Caco-2 (cell line): ENCODE measurements at regions of chr12 and their contacts with region 1.

Region 1: DNA sequence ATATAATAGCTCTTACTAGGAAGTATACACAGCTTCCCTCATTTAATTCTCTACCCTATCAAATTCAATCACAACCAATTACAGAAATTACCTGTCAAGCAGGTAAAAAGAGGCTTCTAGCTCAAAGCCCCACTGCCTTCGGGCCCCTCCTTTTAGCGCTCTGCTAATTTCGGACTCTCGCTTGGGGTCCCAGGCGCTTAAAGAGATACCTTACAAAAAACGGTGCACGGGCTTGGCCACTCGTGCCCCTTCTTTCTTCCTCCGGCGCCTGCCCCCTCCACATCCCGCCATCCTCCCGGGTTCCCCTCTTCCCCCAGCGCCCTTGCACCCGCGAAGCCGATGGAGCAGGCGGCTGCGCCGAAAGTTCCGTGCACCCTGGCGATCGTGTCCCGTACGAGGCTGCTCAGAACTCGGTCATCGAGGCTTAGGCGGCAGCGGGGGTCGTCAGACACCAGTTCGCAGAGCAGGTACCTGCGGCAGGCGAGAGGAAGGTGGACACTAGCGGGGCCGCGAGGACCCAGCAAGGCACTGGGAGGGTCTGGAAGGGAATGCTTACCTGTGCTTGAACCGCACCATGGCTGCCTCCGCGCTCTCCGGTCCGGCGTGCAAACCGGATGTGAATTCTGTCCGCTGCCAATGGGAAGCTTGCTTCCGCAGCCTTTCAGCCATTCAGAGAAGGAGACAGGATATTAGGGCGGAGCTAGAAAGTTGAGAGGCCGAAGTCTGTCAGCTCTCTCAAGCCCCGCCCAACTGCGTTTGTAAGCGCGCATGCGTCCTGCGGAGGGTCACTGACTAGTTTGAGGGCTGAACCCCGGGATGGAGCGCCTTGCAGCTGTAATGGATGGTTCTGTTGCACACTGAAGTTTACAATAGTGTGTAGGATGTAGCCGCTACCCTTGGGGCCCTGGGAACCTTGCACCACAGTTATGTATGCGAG is at the start of gene POP5:
- DNase-seq: peak; percentile 96 to 97
- H3K4me3 ChIP-seq: peak within 1 kb of the TSS; percentile 86
- H3K4me3 Mint-ChIP-seq: peak within 1 kb of the TSS; percentile 99
- H3K27ac Mint-ChIP-seq: peak within 1 kb of the TSS; percentile 96
- H3K4me1 ChIP-seq: no peaks in the 10 kb centered on the region
- H3K4me1 Mint-ChIP-seq: peaks cover 15% of the 10 kb centered on the region
- H3K27me3 ChIP-seq: no peaks in the 10 kb centered on the region
- H3K27me3 Mint-ChIP-seq: no peaks in the 10 kb centered on the region
- CTCF ChIP-seq: no peak
- total RNA-seq, gene POP5: 49.5 and 53.9 TPM in 2 replicates

Region 2: GRCh38 chr12:120437754-120438494 is 143.1 kb before region 1 on chr12 and contains the start of gene COX6A1:
- CTCF ChIA-PET with region 1: no interaction called
- POLR2A ChIA-PET with region 1: no interaction called
- intact Hi-C with region 1: loop called (anchors 2 kb)
- DNase-seq: peak; percentile 97 to 99
- H3K4me3 ChIP-seq: peak within 1 kb of the TSS; percentile 46
- H3K4me3 Mint-ChIP-seq: peak within 1 kb of the TSS; percentile 90
- H3K27ac Mint-ChIP-seq: peak within 1 kb of the TSS; percentile 70
- H3K4me1 ChIP-seq: no peaks in the 10 kb centered on the region
- H3K4me1 Mint-ChIP-seq: no peaks in the 10 kb centered on the region
- H3K27me3 ChIP-seq: no peaks in the 10 kb centered on the region
- H3K27me3 Mint-ChIP-seq: no peaks in the 10 kb centered on the region
- CTCF ChIP-seq: no peak
- total RNA-seq, gene COX6A1: 474 and 492 TPM in 2 replicates

Region 3: DNA sequence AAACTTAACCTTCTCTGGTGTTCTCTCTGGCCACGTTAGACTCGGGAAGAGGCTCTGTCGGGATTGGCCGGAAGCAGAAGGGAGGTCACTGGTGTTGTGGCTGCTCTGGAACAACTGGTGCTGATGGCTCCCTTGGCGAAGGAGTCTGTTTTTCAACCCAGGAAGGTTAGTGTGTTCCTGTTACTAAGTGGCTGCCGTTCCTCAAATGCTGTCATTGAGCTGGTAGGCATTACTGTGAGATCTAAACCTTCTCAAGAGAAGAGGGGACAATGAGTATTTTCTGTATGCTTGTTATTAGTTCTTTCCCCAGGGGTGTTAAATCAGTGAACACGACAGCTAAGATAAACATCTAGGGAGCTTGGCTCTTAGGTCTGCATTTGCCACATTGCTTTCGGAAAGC is 18.1 kb before region 1 on chr12:
- CTCF ChIA-PET with region 1: interaction called, 12 read pairs
- POLR2A ChIA-PET with region 1: interaction called, 3 read pairs
- intact Hi-C with region 1: no loop called
- DNase-seq: no peak
- H3K4me3 ChIP-seq: no peak overlapping the region
- H3K4me3 Mint-ChIP-seq: no peak overlapping the region
- H3K27ac Mint-ChIP-seq: no peak overlapping the region
- H3K4me1 ChIP-seq: 0 out of 2 replicates have a peak, but pooled peaks cover 6% of the 10 kb centered on the region
- H3K4me1 Mint-ChIP-seq: peaks cover 7% of the 10 kb centered on the region
- H3K27me3 ChIP-seq: no peaks in the 10 kb centered on the region
- H3K27me3 Mint-ChIP-seq: no peaks in the 10 kb centered on the region
- CTCF ChIP-seq: no peak

Region 4: GRCh38 chr12:120710031-120710804 is 129.2 kb after region 1 on chr12 and contains the start of gene UNC119B:
- CTCF ChIA-PET with region 1: interaction called, 3 read pairs
- POLR2A ChIA-PET with region 1: no interaction called
- intact Hi-C with region 1: loop called (anchors 1 kb)
- DNase-seq: peak; percentile 61 to 82
- H3K4me3 ChIP-seq: peak within 1 kb of the TSS; percentile 70
- H3K4me3 Mint-ChIP-seq: peak within 1 kb of the TSS; percentile 80
- H3K27ac Mint-ChIP-seq: peak within 1 kb of the TSS; percentile 45
- H3K4me1 ChIP-seq: peaks cover 9% of the 10 kb centered on the region
- H3K4me1 Mint-ChIP-seq: peaks cover 12% of the 10 kb centered on the region
- H3K27me3 ChIP-seq: no peaks in the 10 kb centered on the region
- H3K27me3 Mint-ChIP-seq: no peaks in the 10 kb centered on the region
- CTCF ChIP-seq: no peak
- total RNA-seq, gene UNC119B: 39.1 and 44.4 TPM in 2 replicates

Region 5: DNA sequence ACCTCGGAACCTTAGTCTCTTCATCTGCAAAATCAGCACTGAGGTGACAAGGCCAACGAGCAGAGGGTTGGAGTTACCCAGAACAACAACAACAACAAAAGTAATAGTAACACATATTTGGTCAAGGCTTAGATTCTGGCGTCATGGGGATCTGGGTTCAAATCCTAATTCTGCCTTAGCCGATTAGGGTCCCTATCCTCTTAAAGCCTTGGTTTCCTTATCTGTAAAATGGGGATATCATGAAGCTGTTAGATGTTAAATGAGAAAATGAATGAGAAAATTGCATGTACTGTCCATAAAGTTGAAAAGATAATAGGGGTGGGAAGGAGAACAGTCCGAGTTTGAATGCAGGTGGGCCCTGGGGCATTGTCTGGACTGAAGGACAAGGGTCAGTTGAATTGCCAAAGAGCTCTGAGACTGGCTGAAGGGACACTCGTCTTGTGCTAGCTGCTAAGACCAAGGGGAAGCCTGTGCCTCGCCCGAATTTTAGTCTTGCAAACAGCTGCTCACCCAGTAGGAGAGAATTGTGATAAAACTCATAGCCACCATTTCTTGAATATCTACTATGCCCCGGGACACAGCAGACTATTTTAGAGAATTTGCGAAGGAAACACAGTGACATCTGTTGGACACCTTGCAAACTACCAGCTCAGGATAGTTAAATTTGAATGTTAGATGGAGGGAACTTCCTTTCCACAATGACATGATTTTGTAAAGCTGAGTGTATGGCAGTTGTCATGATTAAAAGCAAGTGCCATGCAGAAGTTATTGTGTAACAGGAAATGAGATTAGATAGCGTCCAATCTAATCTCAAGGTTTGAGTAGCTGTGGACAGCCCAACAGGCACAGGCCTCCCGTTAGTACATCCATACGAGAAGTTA is 390.5 kb after region 1 on chr12:
- CTCF ChIA-PET with region 1: interaction called, 8 read pairs
- POLR2A ChIA-PET with region 1: interaction called, 5 read pairs
- intact Hi-C with region 1: loop called (anchors 2 kb)
- DNase-seq: peak in 1 of 2 experiments; percentile 43
- H3K4me3 ChIP-seq: no peak overlapping the region
- H3K4me3 Mint-ChIP-seq: no peak overlapping the region
- H3K27ac Mint-ChIP-seq: no peak overlapping the region
- H3K4me1 ChIP-seq: peaks cover 36% of the 10 kb centered on the region
- H3K4me1 Mint-ChIP-seq: peaks cover 12% of the 10 kb centered on the region
- H3K27me3 ChIP-seq: no peaks in the 10 kb centered on the region
- H3K27me3 Mint-ChIP-seq: no peaks in the 10 kb centered on the region
- CTCF ChIP-seq: peak; percentile 45 to 68

Region 6: DNA sequence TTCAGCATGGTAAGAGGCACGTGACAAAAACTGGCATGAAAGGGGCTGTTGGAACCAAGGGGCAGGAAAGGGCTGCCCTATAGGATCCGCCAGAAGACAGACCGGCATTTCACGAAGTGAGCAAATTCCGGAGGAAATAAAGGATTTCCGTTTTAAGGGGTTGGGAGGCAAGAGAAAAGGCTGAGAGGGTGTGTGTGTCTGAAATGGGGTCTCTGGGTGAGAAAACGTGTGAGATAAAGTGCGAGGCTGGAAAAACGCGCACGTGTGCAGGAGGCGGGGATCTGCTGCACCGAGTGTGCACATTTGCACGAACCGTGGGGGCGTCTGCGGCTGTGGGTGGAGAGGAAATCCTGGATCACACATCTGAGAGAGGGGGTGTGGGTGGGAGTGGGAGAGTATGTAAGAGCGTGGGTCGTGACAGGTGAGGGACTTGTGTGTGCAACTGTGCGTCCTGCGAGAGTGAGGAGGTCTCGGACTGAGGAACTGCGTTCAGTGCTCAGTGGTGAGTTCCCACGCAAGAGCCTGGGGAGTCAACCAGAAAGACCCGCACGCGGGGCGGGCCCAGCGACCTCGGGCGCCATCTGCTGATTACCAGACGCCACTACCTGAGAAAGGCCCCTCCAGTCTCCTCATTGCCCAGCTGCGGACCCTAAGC is 514.6 kb after region 1 on chr12:
- CTCF ChIA-PET with region 1: no interaction called
- POLR2A ChIA-PET with region 1: no interaction called
- intact Hi-C with region 1: loop called (anchors 5 kb)
- DNase-seq: peak; percentile 78 to 85
- H3K4me3 ChIP-seq: peak overlapping the region; percentile 46
- H3K4me3 Mint-ChIP-seq: peak overlapping the region; percentile 96
- H3K27ac Mint-ChIP-seq: peak overlapping the region; percentile 82
- H3K4me1 ChIP-seq: 0 out of 2 replicates have a peak, but pooled peaks cover 3% of the 10 kb centered on the region
- H3K4me1 Mint-ChIP-seq: peaks cover 9% of the 10 kb centered on the region
- H3K27me3 ChIP-seq: no peaks in the 10 kb centered on the region
- H3K27me3 Mint-ChIP-seq: no peaks in the 10 kb centered on the region
- CTCF ChIP-seq: peak; percentile 84 to 86